CD4-positive, alpha-beta memory T cell (primary cell): ENCODE measurements at regions of chr15 and their contacts with region 1.

Region 1: GRCh38 chr15:69475769-69476358 is 23.2 kb downstream of the RPLP1 start:
- DNase-seq: peak; percentile 64 to 73 (median 69)
- H3K4me3 ChIP-seq: no peak overlapping the region
- H3K4me3 Mint-ChIP-seq: no peak overlapping the region
- H3K27ac ChIP-seq: no peak overlapping the region
- H3K27ac Mint-ChIP-seq: no peak overlapping the region
- H3K4me1 ChIP-seq: peaks cover 4% of the 10 kb centered on the region
- H3K4me1 Mint-ChIP-seq: peaks cover 0 to 4% (median under 1%) of the 10 kb centered on the region in 4 donors
- H3K27me3 ChIP-seq: no peaks in the 10 kb centered on the region
- H3K27me3 Mint-ChIP-seq: peaks cover 0 to 1% of the 10 kb centered on the region in 2 donors

Region 2: GRCh38 chr15:69337133-69337532 is 138.7 kb before region 1 on chr15:
- CTCF ChIA-PET with region 1: no interaction called
- POLR2A ChIA-PET with region 1: no interaction called
- intact Hi-C with region 1: no loop called
- DNase-seq: no peak
- H3K4me3 ChIP-seq: no peak overlapping the region
- H3K4me3 Mint-ChIP-seq: no peak overlapping the region
- H3K27ac ChIP-seq: no peak overlapping the region
- H3K27ac Mint-ChIP-seq: no peak overlapping the region
- H3K4me1 ChIP-seq: no peaks in the 10 kb centered on the region
- H3K4me1 Mint-ChIP-seq: peaks cover 0 to 4% (median 1%) of the 10 kb centered on the region in 4 donors
- H3K27me3 ChIP-seq: no peaks in the 10 kb centered on the region
- H3K27me3 Mint-ChIP-seq: peaks cover 3 to 7% of the 10 kb centered on the region in 2 donors

Region 3: GRCh38 chr15:69489073-69489571 is 13.3 kb after region 1 on chr15:
- CTCF ChIA-PET with region 1: interaction called, 15 read pairs
- POLR2A ChIA-PET with region 1: no interaction called
- intact Hi-C with region 1: no loop called
- DNase-seq: no peak
- H3K4me3 ChIP-seq: no peak overlapping the region
- H3K4me3 Mint-ChIP-seq: no peak overlapping the region
- H3K27ac ChIP-seq: no peak overlapping the region
- H3K27ac Mint-ChIP-seq: no peak overlapping the region
- H3K4me1 ChIP-seq: no peaks in the 10 kb centered on the region
- H3K4me1 Mint-ChIP-seq: no peaks in the 10 kb centered on the region
- H3K27me3 ChIP-seq: no peaks in the 10 kb centered on the region
- H3K27me3 Mint-ChIP-seq: no peaks in the 10 kb centered on the region

Region 4: DNA sequence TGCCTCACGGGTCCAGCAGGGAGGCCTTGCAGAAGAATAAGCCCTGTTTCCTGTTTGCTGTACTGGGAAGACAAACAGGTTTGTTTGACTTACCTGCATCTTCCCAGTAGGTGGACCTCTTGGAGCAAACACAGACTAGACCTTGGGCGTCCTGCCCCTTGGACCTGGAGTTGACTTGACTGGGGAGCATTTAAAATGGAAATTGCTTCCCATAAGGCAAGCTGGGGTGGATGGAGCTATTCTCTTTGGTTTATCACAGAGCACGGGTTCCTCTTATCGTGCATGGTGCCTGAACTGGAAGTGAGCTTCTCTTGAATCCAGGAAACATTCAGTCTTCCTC is 128.2 kb after region 1 on chr15:
- CTCF ChIA-PET with region 1: no interaction called
- POLR2A ChIA-PET with region 1: no interaction called
- intact Hi-C with region 1: no loop called
- DNase-seq: no peak
- H3K4me3 ChIP-seq: no peak overlapping the region
- H3K4me3 Mint-ChIP-seq: no peak overlapping the region
- H3K27ac ChIP-seq: no peak overlapping the region
- H3K27ac Mint-ChIP-seq: no peak overlapping the region
- H3K4me1 ChIP-seq: no peaks in the 10 kb centered on the region
- H3K4me1 Mint-ChIP-seq: peaks cover 6 to 13% (median 7%) of the 10 kb centered on the region in 4 donors
- H3K27me3 ChIP-seq: no peaks in the 10 kb centered on the region
- H3K27me3 Mint-ChIP-seq: peaks cover 0 to 4% of the 10 kb centered on the region in 2 donors

Region 5: DNA sequence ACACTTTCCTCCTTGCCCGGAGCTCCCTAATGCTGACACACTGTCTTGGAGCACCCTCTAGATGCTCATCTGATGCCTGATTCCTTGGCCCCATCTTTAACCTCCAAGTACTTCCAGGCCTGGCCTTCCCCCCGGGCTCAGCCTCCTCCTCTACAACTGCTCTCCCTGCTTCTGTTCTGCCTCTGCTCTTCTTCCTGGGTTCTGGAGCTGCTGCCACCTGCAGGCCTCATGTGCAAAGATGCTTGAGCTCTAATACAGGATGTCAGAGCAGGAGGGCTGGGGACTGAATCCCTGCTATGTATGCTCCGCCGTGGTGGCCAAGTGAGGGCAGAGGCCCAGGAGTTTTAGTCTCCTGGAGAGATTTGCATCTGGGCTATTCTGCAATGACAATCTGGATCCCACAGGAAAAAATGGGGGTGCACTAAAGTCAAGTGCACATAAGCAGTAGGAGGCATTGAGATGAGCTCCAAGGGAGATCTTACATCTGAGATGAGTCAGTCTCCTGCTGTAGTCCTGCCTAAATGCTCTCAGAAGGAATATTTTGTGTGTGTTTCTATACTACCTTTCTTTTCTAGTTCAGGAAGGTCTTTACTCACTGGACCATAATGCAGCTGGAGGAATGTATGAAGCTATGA is 991.1 kb after region 1 on chr15:
- CTCF ChIA-PET with region 1: interaction called, 95 read pairs
- POLR2A ChIA-PET with region 1: interaction called, 3 read pairs
- intact Hi-C with region 1: loop called (anchors 1 kb)
- DNase-seq: peak in 4 of 5 donors; percentile 30 to 50 (median 46)
- H3K4me3 ChIP-seq: no peak overlapping the region
- H3K4me3 Mint-ChIP-seq: no peak overlapping the region
- H3K27ac ChIP-seq: no peak overlapping the region
- H3K27ac Mint-ChIP-seq: no peak overlapping the region
- H3K4me1 ChIP-seq: peaks cover 6% of the 10 kb centered on the region
- H3K4me1 Mint-ChIP-seq: peaks cover 4 to 5% (median 5%) of the 10 kb centered on the region in 4 donors
- H3K27me3 ChIP-seq: no peaks in the 10 kb centered on the region
- H3K27me3 Mint-ChIP-seq: peaks cover 0 to 8% of the 10 kb centered on the region in 2 donors

Region 6: DNA sequence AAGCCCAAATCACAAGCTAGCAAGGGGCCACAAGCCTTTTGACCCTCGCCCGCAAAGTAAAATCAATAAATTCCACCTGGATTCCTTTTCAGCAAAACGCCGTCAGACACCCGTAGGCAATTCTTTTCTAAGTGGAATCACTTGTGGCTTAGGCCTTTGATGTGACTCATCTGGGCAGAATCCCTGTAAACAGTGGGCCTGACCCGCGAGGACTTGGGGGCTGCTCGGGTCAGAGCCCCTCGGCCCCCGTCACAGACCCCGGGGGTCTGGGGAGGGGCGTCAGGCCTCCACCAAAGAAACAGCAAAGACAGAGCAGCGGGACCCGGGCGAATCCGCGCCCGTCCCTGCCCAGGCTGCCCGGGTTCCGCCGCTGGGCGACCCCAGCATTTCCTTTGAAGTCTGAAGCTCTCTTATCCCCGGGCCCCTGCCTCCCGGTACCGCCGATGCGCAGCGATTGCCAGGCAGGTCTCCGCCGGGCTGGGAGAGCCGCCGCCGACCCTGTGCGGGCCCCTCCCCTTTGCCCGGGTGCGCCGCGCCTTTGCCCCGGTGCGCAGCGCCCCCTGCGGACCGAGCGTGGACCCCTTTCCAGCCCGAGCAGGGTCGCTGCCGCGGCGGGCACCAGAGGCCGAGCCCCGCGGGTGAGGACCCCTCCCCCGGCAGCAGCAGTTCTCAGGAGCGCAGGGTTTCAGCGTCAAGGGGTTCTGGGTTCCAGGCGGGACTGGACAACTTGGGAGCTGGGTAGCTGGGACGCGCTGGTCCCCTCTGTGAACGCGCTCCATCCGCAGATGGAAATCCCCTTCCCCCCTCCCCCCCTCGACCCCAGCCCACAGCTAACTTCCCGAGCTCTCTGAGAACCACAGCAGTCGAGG is 1109.2 kb after region 1 on chr15:
- CTCF ChIA-PET with region 1: interaction called, 7 read pairs
- POLR2A ChIA-PET with region 1: no interaction called
- intact Hi-C with region 1: loop called (anchors 10 kb)
- DNase-seq: peak in 4 of 5 donors; percentile 14 to 31 (median 26)
- H3K4me3 ChIP-seq: no peak overlapping the region
- H3K4me3 Mint-ChIP-seq: peak overlapping the region in 5 of 8 donors; percentile 36 to 66 (median 63)
- H3K27ac ChIP-seq: no peak overlapping the region
- H3K27ac Mint-ChIP-seq: peak overlapping the region in 1 of 7 donors; percentile 53
- H3K4me1 ChIP-seq: peaks cover 12% of the 10 kb centered on the region
- H3K4me1 Mint-ChIP-seq: peaks cover 5 to 13% (median 10%) of the 10 kb centered on the region in 4 donors
- H3K27me3 ChIP-seq: peaks cover 8% of the 10 kb centered on the region
- H3K27me3 Mint-ChIP-seq: peaks cover 18 to 29% of the 10 kb centered on the region in 2 donors